ENCODE measurements at regions of chr6 and their contacts with region 1.

Region 1: DNA sequence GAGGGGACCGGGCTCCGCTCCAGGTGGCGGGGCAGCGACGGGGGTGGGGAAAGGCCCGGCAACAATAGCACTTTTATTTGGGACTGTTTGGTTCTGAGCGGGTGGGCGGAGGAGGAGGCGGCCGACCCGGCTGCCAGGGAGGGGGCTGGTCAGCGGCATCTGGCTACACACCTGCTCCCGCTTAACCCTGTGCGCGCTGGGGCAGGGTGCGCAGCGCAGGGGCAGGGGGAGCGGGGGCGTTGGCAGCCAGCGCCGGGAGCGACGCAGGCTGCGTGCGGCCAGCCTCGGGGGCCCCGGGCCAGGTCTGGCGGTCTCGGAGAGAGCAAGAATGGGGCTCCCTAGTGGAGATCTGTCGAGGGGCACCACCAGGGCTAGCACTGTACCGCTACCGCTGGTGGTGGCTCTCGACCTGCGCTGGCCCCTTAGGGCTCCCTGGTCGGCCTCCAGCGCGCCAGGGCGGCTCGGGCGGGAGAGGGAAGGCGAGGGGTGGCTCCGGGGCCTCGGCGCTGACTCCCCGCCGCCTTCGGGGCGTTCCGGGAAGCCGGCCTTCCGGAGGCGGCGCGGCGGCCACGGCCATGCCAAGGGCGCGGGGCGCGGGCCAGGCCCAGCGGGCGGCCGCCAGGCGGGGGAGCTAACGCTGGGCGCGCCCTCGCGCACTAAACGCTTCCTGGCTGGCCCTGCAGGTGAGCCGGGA is 92.4 kb downstream of the NCR2 start:
- DNase-seq: peak in 1 of 2 donors; percentile 58
- H3K4me3 ChIP-seq: peak overlapping the region; percentile 44 to 82 (median 58)
- H3K27ac ChIP-seq: peak overlapping the region; percentile 89 to 92
- H3K4me1 ChIP-seq: peaks cover 4 to 15% of the 10 kb centered on the region in 2 donors
- H3K27me3 ChIP-seq: no peaks in the 10 kb centered on the region
- CTCF ChIP-seq: no peak
- POLR2A ChIP-seq: no peak

Region 2: GRCh38 chr6:41463062-41463930 is 35.5 kb after region 1 on chr6:
- intact Hi-C with region 1: loop called (anchors 1 kb)
- DNase-seq: peak in 1 of 2 donors; percentile 71
- H3K4me3 ChIP-seq: no peak overlapping the region
- H3K27ac ChIP-seq: no peak overlapping the region
- H3K4me1 ChIP-seq: no peaks in the 10 kb centered on the region
- H3K27me3 ChIP-seq: no peaks in the 10 kb centered on the region
- CTCF ChIP-seq: peak; percentile 55 to 71 (median 57)
- POLR2A ChIP-seq: no peak